ENCODE measurements at regions of chr16 and their contacts with region 1.

Region 1: GRCh38 chr16:84144859-84145639 is at the starts of genes DNAAF1 and HSDL1:
- DNase-seq: peak; percentile 93
- H3K4me3 Mint-ChIP-seq: peak within 1 kb of the TSS; percentile 90
- H3K27ac Mint-ChIP-seq: no peak within 1 kb of the TSS
- H3K4me1 Mint-ChIP-seq: peaks cover 13% of the 10 kb centered on the region
- H3K27me3 Mint-ChIP-seq: no peaks in the 10 kb centered on the region
- total RNA-seq, gene DNAAF1: not detected
- total RNA-seq, gene HSDL1: 5.8 to 7.5 TPM

Region 2: DNA sequence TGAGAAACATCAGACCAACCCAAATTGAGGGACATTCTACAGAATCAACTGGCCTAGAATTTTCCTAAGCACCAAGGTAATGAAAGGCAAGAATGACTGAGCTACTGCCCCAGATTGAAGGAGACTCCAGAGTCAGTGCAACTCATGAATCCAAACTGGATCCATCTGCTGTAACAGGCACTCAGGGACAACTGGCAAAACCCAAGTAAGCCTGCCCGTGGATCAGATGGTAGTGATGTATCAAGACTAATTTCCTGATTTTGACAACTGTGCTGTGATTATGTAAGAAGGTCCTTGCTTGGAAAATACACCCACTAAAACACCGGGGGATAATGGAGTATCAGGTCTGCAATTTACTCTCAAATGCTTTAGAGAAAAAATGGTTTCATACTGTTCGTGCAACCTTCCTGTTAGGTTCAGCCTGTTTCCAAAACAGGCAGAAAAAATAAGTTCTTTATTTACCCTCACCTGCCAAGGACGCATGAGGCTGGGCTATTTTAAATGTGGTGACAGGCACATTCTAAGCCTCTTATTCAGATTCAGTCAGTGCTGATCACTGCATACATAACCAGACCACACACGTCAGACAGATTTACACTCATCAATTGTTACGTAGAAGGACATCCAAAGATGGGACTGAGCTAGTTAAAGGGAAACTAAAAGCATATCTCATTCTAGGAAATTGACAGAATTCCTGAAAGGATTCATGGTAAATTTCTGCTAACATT is 35.3 kb before region 1 on chr16:
- CTCF ChIA-PET with region 1: no interaction called
- intact Hi-C with region 1: no loop called
- DNase-seq: no peak
- H3K4me3 Mint-ChIP-seq: no peak overlapping the region
- H3K27ac Mint-ChIP-seq: no peak overlapping the region
- H3K4me1 Mint-ChIP-seq: peaks cover 53% of the 10 kb centered on the region
- H3K27me3 Mint-ChIP-seq: no peaks in the 10 kb centered on the region

Region 3: DNA sequence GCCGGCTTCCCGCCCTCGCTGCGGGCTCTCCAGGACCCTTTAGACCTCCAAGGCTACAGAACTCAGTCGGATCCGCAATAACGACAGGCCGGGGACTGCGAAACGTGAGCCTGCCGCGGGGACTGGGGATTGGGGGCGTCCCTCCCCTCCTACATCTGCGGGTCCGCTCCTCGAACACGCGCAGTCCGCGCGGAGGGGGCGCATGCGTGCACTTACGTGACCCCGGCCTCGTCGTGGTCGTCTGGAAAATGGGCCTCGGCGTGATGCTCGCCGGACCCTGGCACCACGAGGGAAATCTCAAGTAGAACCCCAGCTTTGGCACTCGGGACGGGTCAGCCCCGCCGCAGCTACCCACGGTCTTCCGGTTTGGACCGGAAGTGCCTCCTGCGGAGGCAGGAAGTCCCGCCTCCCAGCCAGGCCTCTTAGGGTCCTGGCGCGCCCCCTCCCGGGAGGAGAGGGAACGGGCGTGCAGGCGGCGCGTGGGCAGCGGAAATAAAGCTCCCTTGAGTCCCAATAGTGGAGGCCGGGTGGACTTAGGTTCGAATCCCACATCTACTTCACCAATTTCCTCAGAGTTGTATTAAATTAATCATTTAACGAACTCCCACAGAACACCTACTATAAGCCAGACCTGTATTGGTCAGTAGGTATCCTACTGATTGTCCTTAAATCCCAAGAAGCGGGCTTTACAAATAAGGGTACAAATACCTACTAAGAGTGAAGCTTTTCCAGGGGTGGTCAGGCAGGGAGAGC is 41.8 kb after region 1 on chr16 and contains the start of gene TAF1C:
- CTCF ChIA-PET with region 1: interaction called, 4 read pairs
- intact Hi-C with region 1: loop called (anchors 1 kb)
- DNase-seq: peak; percentile 94
- H3K4me3 Mint-ChIP-seq: peak within 1 kb of the TSS; percentile 93
- H3K27ac Mint-ChIP-seq: peak within 1 kb of the TSS; percentile 89
- H3K4me1 Mint-ChIP-seq: peaks cover 21% of the 10 kb centered on the region
- H3K27me3 Mint-ChIP-seq: no peaks in the 10 kb centered on the region
- total RNA-seq, gene TAF1C: 59.3 to 66.2 TPM

Measured in activated naive CD4-positive, alpha-beta T cell treated with anti-CD3 and anti-CD28 coated beads for 36 hours (primary cell).